ENCODE measurements at regions of chr7 and their contacts with region 1.

Region 1: DNA sequence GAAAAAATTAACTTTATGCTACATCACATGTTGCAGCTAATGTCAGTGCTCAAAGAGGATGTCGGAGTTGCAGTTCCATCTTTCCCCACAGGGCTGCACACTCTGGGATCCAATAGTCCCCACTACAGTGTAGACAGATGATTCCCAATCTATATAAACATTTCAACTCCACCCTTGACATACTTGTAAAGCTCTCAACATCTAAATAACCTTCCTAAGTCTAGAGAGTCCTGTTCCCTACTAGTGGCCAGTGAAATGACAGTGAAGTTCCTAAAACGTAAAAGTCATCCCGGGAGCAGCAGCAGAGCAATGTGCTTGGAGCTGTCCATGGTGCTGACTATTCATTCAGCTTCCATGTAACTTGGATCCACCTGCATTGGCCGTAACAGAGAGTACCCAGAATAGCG is 145.1 kb downstream of the GRM8 start:
- DNase-seq: peak; percentile 59 to 81 (median 66)
- ATAC-seq: peak; percentile 93
- H3K4me3 ChIP-seq: no peak overlapping the region
- H3K27ac ChIP-seq: no peak overlapping the region
- H3K4me1 ChIP-seq: no peaks in the 10 kb centered on the region
- H3K27me3 ChIP-seq: no peaks in the 10 kb centered on the region
- CTCF ChIP-seq: peak; percentile 28 to 82 (median 49); a peak in 5 of 6 replicates
- EP300 ChIP-seq: no peak
- POLR2A ChIP-seq: no peak
- RAD21 ChIP-seq: peak; percentile 60 to 61

Region 2: GRCh38 chr7:126483972-126484371 is 623.6 kb before region 1 on chr7:
- CTCF ChIA-PET with region 1: no interaction called
- POLR2A ChIA-PET with region 1: no interaction called
- in situ Hi-C with region 1: no loop called
- intact Hi-C with region 1: no loop called
- DNase-seq: no peak
- ATAC-seq: no peak
- H3K4me3 ChIP-seq: no peak overlapping the region
- H3K27ac ChIP-seq: no peak overlapping the region
- H3K4me1 ChIP-seq: no peaks in the 10 kb centered on the region
- H3K27me3 ChIP-seq: no peaks in the 10 kb centered on the region
- CTCF ChIP-seq: no peak
- EP300 ChIP-seq: no peak
- POLR2A ChIP-seq: no peak
- RAD21 ChIP-seq: no peak

Region 3: GRCh38 chr7:127150543-127150942 is 42.9 kb after region 1 on chr7:
- CTCF ChIA-PET with region 1: no interaction called
- POLR2A ChIA-PET with region 1: no interaction called
- in situ Hi-C with region 1: no loop called
- intact Hi-C with region 1: no loop called
- DNase-seq: no peak
- ATAC-seq: no peak
- H3K4me3 ChIP-seq: no peak overlapping the region
- H3K27ac ChIP-seq: no peak overlapping the region
- H3K4me1 ChIP-seq: no peaks in the 10 kb centered on the region
- H3K27me3 ChIP-seq: no peaks in the 10 kb centered on the region
- CTCF ChIP-seq: no peak
- EP300 ChIP-seq: no peak
- POLR2A ChIP-seq: no peak
- RAD21 ChIP-seq: no peak

Region 4: GRCh38 chr7:127514499-127514898 is 406.9 kb after region 1 on chr7:
- CTCF ChIA-PET with region 1: no interaction called
- POLR2A ChIA-PET with region 1: no interaction called
- in situ Hi-C with region 1: no loop called
- intact Hi-C with region 1: loop called (anchors 1 kb)
- DNase-seq: peak in 2 of 4 experiments; percentile 44 to 48
- ATAC-seq: peak; percentile 89
- H3K4me3 ChIP-seq: no peak overlapping the region
- H3K27ac ChIP-seq: no peak overlapping the region
- H3K4me1 ChIP-seq: no peaks in the 10 kb centered on the region; a peak in 1 of 5 replicates
- H3K27me3 ChIP-seq: peaks cover 2 to 8% of the 10 kb centered on the region in 2 experiments
- CTCF ChIP-seq: peak; percentile 40 to 66 (median 62); a peak in 5 of 6 replicates
- EP300 ChIP-seq: no peak
- POLR2A ChIP-seq: no peak
- RAD21 ChIP-seq: peak; percentile 62 to 77